Left colon (tissue), 2 donors: ENCODE measurements at regions of chr6 and their contacts with region 1.

Region 1: DNA sequence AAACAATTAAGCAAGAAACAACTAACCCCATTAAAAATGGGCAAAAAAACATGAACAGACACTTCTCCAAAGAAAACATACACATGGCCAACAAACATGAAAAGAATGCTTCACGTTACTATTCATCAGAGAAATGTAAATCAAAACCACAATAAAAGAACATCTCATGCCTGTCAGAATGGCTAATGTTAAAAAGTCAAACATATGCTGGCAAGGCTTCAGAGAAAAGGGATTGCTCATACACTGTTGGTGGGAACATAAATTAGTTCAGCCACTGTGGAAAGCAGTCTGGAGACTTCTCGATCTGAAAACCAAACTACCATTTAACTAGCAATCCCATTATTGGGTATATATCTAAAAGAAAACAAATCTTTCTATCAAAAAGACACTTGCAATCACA is 217.5 kb downstream of the TINAG start:
- DNase-seq: no peak
- ATAC-seq: no peak

Region 2: GRCh38 chr6:53956068-53956711 is 569.5 kb before region 1 on chr6:
- intact Hi-C with region 1: no loop called
- DNase-seq: peak; percentile 65 to 86
- ATAC-seq: peak; percentile 100

Region 3: GRCh38 chr6:54493138-54493537 is 32.6 kb before region 1 on chr6:
- intact Hi-C with region 1: loop called in 1 of 2 experiments (anchors 2 kb)
- DNase-seq: no peak
- ATAC-seq: no peak